ENCODE measurements at regions of chr2 and their contacts with region 1.

Region 1: GRCh38 chr2:102442967-102443828 is 20.2 kb downstream of the IL18RAP start:
- DNase-seq: no peak
- ATAC-seq: peak; percentile 56

Region 2: DNA sequence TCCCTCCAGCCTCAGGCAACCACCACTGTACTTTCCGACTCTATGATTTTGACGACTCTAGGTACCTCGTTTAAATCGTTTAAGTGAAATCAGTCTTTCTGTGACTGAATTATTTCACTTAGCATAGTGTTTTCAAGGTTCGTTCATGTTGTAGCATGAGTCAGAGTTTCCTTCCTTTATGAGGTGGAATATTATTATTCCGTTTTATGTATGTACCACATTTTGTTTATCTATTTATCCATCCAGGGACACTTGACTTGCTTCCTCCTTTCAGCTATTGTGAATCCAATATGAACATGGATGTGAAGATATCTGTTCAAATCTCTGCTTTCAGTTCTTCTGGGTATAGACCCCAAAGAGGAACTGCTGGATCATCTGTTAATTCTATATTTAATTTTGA is 432.3 kb before region 1 on chr2:
- intact Hi-C with region 1: loop called (anchors 10 kb)
- DNase-seq: no peak
- ATAC-seq: peak; percentile 25

Region 3: DNA sequence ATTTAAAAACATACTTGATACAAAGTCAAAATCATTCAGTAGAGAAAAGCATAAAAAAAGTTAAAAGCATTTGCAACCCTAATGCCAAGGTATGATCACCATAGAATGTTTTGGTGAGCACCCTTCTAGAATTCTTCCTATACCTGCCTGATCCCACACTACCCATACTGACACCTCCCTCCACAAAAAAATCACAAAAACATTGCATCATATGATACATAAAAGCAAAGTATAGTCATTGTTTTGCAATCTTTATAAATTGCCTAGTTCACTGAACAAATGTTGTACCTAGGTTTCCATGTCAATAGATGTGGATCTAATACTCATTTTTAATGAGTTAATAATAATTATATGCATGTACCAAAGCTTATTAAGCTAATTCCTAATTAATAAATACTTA is 83.9 kb after region 1 on chr2:
- intact Hi-C with region 1: no loop called
- DNase-seq: no peak
- ATAC-seq: no peak